IMR-90 (cell line): ENCODE measurements at regions of chr2 and their contacts with region 1.

Region 1: GRCh38 chr2:44479122-44479887 is 117.6 kb downstream of the CAMKMT start:
- DNase-seq: peak; percentile 87
- ATAC-seq: peak; percentile 100
- H3K4me3 ChIP-seq: no peak overlapping the region
- H3K27ac ChIP-seq: no peak overlapping the region
- H3K4me1 ChIP-seq: no peaks in the 10 kb centered on the region
- H3K27me3 ChIP-seq: no peaks in the 10 kb centered on the region
- CTCF ChIP-seq: peak; percentile 100; the same call in 1 of the 2 replicates
- POLR2A ChIP-seq: no peak
- RAD21 ChIP-seq: peak; percentile 90

Region 2: DNA sequence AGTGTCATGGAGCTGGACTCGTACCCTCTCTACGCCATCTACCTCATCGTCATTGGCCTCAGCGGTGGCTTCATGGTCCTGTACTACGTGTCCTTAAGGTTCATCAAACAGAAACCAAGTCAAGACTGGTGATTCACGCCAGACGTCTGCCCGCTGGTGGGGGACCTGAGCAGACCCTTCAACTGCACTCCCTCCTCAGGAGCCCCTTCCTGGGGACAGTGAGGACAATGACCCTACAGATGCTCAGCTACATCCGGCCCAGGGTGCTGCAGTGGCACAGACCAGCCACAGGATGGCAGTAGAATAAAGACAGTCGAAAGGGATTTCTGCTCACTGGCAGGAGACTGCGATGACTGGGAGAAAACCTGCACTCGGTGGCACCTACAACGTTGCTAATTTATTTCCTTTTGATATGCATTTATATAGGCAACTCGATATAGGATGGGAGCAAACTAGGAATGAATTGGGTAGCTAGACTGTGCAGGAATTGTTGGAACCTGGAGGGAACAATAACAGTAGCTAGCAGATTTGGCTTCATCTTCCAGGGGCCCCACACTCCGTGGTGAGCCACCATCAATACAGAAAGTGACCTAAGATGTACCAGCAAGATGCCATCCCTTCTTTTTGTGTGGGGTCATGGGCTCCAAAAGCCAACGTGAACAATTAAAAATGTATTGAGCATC is 601.4 kb before region 1 on chr2:
- CTCF ChIA-PET with region 1: no interaction called
- POLR2A ChIA-PET with region 1: no interaction called
- dilution Hi-C with region 1: no loop called
- in situ Hi-C with region 1: no loop called
- intact Hi-C with region 1: loop called (anchors 5 kb)
- DNase-seq: peak; percentile 56
- ATAC-seq: peak; percentile 88
- H3K4me3 ChIP-seq: no peak overlapping the region
- H3K27ac ChIP-seq: no peak overlapping the region
- H3K4me1 ChIP-seq: peaks cover 4% of the 10 kb centered on the region
- H3K27me3 ChIP-seq: peaks cover 24% of the 10 kb centered on the region
- CTCF ChIP-seq: peak; percentile 93
- POLR2A ChIP-seq: no peak
- RAD21 ChIP-seq: peak; percentile 85

Region 3: GRCh38 chr2:43995733-43996533 is 483.4 kb before region 1 on chr2 and contains the start of gene LRPPRC:
- CTCF ChIA-PET with region 1: no interaction called
- POLR2A ChIA-PET with region 1: no interaction called
- dilution Hi-C with region 1: no loop called
- in situ Hi-C with region 1: no loop called
- intact Hi-C with region 1: no loop called
- DNase-seq: peak; percentile 97
- ATAC-seq: peak; percentile 99
- H3K4me3 ChIP-seq: peak within 1 kb of the TSS; percentile 71
- H3K27ac ChIP-seq: peak within 1 kb of the TSS; percentile 78
- H3K4me1 ChIP-seq: 0 out of 2 replicates have a peak, but pooled peaks cover 2% of the 10 kb centered on the region
- H3K27me3 ChIP-seq: no peaks in the 10 kb centered on the region
- CTCF ChIP-seq: no peak
- POLR2A ChIP-seq: peak; percentile 98
- RAD21 ChIP-seq: no peak
- total RNA-seq, gene LRPPRC: 36.0 and 59.7 TPM in 2 replicates

Region 4: DNA sequence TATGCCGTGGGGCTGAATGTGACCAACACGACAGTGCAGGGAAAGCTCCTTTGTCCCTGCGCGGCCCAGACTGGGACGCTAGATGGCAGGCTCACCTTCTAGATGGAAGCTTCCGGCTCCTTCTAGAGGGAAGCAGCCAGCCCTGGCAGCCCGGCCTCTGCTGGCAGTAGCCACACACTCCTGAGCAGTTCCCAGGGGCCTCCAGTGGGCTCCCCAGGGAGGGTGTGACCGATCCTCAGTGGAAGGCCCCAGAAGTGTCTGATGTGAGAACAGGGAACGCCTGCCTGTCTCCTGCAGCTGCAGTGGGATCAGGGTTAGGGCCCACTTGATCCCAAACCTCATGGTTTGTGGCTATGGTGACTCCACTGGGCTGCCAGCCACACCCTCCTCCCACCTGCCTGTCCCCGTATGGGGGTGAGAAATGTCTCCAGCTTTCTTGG is 435.0 kb before region 1 on chr2:
- CTCF ChIA-PET with region 1: interaction called, 6 read pairs
- POLR2A ChIA-PET with region 1: no interaction called
- dilution Hi-C with region 1: no loop called
- in situ Hi-C with region 1: loop called (anchors 10 kb)
- intact Hi-C with region 1: loop called (anchors 1 kb)
- DNase-seq: peak; percentile 74
- ATAC-seq: peak; percentile 100
- H3K4me3 ChIP-seq: no peak overlapping the region
- H3K27ac ChIP-seq: no peak overlapping the region
- H3K4me1 ChIP-seq: 0 out of 2 replicates have a peak, but pooled peaks cover 1% of the 10 kb centered on the region
- H3K27me3 ChIP-seq: peaks cover 25% of the 10 kb centered on the region
- CTCF ChIP-seq: peak; percentile 96
- POLR2A ChIP-seq: no peak
- RAD21 ChIP-seq: peak; percentile 93

Region 5: DNA sequence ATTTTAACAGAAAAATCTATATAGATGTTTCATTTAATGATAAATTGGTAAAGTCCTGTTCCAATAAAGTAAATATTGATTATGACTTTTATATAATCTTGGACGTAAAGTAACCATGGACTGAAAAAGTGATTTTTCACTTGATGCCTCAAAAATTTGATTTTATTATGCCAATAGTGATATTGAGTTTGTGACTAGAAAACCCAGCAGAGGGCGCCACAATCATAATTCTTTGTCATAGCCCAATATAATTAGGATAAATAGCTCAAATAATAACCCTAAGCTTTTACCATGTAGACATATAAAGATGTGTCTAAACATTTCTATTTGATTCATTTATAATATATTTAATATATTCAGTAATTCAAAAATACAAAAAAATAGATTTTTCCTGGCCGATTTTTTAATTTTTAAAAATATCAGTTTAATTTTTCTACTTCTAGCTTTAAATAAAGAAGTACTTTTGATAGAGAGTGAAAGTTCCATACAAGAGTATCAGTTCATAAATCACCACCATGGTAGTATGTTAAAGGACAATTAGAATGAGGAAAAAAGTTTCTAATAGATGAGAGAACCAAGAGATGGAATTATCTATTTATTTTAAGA is 86.9 kb before region 1 on chr2:
- CTCF ChIA-PET with region 1: interaction called, 21 read pairs
- POLR2A ChIA-PET with region 1: no interaction called
- dilution Hi-C with region 1: no loop called
- in situ Hi-C with region 1: no loop called
- intact Hi-C with region 1: loop called (anchors 1 kb)
- DNase-seq: peak; percentile 21
- ATAC-seq: peak; percentile 37; the same call in 1 of the 2 replicates
- H3K4me3 ChIP-seq: no peak overlapping the region
- H3K27ac ChIP-seq: no peak overlapping the region
- H3K4me1 ChIP-seq: no peaks in the 10 kb centered on the region
- H3K27me3 ChIP-seq: no peaks in the 10 kb centered on the region
- CTCF ChIP-seq: peak; percentile 65
- POLR2A ChIP-seq: no peak
- RAD21 ChIP-seq: peak; percentile 55

Region 6: GRCh38 chr2:44955593-44956392 is 476.5 kb after region 1 on chr2:
- CTCF ChIA-PET with region 1: interaction called, 21 read pairs
- POLR2A ChIA-PET with region 1: no interaction called
- dilution Hi-C with region 1: no loop called
- in situ Hi-C with region 1: loop called (anchors 25 kb)
- intact Hi-C with region 1: loop called (anchors 1 kb)
- DNase-seq: peak; percentile 56
- ATAC-seq: peak; percentile 78
- H3K4me3 ChIP-seq: no peak overlapping the region
- H3K27ac ChIP-seq: no peak overlapping the region
- H3K4me1 ChIP-seq: no peaks in the 10 kb centered on the region
- H3K27me3 ChIP-seq: peaks cover 52% of the 10 kb centered on the region
- CTCF ChIP-seq: peak; percentile 94
- POLR2A ChIP-seq: no peak
- RAD21 ChIP-seq: peak; percentile 89

Region 7: GRCh38 chr2:45533771-45534170 is 1054.5 kb after region 1 on chr2:
- CTCF ChIA-PET with region 1: no interaction called
- POLR2A ChIA-PET with region 1: no interaction called
- dilution Hi-C with region 1: no loop called
- in situ Hi-C with region 1: no loop called
- intact Hi-C with region 1: no loop called
- DNase-seq: peak; percentile 78
- ATAC-seq: peak; percentile 62
- H3K4me3 ChIP-seq: no peak overlapping the region
- H3K27ac ChIP-seq: no peak overlapping the region
- H3K4me1 ChIP-seq: no peaks in the 10 kb centered on the region
- H3K27me3 ChIP-seq: no peaks in the 10 kb centered on the region
- CTCF ChIP-seq: no peak
- POLR2A ChIP-seq: no peak
- RAD21 ChIP-seq: no peak